Dendritic cell treated with granulocyte-macrophage colony-stimulating factor and Interleukin-4, amounts not matched to agents 40 ng/mL and 50 ng/mL, for 4 days (primary cell): ENCODE measurements at regions of chr2 and their contacts with region 1.

Region 1: GRCh38 chr2:148201075-148202004 is 180.4 kb downstream of the MBD5 start:
- H3K4me3 Mint-ChIP-seq: no peak overlapping the region
- H3K27ac Mint-ChIP-seq: no peak overlapping the region
- H3K4me1 Mint-ChIP-seq: no peaks in the 10 kb centered on the region
- H3K27me3 Mint-ChIP-seq: no peaks in the 10 kb centered on the region

Region 2: DNA sequence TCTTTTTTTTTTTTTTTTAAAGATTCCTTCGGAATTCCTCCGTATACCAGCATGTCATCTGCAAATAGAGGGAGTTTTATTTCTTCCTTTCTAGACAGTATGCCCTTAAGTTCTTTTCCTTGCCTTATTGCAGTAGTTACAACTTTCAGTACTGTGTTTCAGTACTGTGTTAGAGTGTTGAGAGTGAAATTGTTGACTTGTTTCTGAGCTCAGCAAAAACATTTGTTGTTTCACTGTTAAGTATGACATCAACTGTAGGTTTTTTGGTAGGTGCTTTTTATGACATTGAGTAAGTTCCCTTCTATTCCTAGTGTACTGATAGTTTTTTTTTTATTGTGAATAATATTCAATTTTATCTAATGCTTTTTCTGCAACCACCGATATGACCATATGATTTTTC is 312.7 kb before region 1 on chr2:
- intact Hi-C with region 1: no loop called
- H3K4me3 Mint-ChIP-seq: no peak overlapping the region
- H3K27ac Mint-ChIP-seq: no peak overlapping the region
- H3K4me1 Mint-ChIP-seq: peaks cover 20% of the 10 kb centered on the region
- H3K27me3 Mint-ChIP-seq: no peaks in the 10 kb centered on the region

Region 3: DNA sequence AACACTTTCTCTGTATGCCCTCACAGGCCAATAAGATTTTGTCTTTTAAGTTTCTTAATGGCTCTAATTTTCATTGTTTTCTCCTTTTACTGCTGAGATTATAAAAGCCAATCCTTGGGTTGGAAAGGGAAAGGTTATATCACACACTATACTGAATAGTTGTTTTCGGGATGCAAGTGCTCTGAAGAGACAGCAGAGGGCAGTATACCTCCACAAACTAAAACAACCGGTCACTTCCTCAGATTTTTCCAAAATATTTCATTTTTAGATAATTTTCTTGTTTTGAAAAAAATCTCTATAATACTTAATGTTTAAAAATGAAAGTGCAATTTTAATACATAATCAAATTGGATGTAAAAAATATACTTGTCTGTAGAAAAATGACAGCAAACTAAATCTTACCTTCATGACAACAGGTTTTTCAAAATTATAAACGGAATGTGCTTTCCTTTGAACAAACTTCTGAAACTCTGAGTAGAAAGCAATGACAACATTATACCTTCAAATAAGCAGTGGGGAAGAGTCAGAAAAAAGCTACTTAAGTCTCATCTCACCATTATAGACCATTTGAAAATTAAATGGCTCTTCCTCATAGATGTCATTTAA is 263.5 kb before region 1 on chr2:
- intact Hi-C with region 1: loop called (anchors 5 kb)
- H3K4me3 Mint-ChIP-seq: no peak overlapping the region
- H3K27ac Mint-ChIP-seq: no peak overlapping the region
- H3K4me1 Mint-ChIP-seq: no peaks in the 10 kb centered on the region
- H3K27me3 Mint-ChIP-seq: no peaks in the 10 kb centered on the region

Region 4: GRCh38 chr2:147989809-147990403 is 211.4 kb before region 1 on chr2:
- intact Hi-C with region 1: loop called (anchors 5 kb)
- H3K4me3 Mint-ChIP-seq: no peak overlapping the region
- H3K27ac Mint-ChIP-seq: no peak overlapping the region
- H3K4me1 Mint-ChIP-seq: peaks cover 6% of the 10 kb centered on the region
- H3K27me3 Mint-ChIP-seq: no peaks in the 10 kb centered on the region

Region 5: DNA sequence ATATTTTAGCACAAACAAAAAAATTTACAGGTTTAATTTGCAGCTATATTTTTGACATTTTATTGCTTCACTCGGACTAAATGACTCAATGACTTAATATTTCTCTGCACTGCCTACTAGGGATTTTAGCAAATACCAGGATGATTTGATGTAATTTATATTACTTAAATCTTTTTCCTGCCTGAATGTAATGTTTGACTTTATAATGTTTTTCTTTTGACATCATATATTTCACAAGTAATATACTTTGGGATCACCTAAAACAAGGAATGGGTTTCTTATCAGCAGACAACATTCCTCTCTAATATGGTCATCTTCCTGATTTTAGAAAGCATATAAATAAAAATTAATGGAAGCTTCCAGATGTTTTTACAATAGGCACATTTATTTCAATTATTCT is 190.0 kb after region 1 on chr2:
- intact Hi-C with region 1: no loop called
- H3K4me3 Mint-ChIP-seq: no peak overlapping the region
- H3K27ac Mint-ChIP-seq: no peak overlapping the region
- H3K4me1 Mint-ChIP-seq: no peaks in the 10 kb centered on the region
- H3K27me3 Mint-ChIP-seq: no peaks in the 10 kb centered on the region

Region 6: DNA sequence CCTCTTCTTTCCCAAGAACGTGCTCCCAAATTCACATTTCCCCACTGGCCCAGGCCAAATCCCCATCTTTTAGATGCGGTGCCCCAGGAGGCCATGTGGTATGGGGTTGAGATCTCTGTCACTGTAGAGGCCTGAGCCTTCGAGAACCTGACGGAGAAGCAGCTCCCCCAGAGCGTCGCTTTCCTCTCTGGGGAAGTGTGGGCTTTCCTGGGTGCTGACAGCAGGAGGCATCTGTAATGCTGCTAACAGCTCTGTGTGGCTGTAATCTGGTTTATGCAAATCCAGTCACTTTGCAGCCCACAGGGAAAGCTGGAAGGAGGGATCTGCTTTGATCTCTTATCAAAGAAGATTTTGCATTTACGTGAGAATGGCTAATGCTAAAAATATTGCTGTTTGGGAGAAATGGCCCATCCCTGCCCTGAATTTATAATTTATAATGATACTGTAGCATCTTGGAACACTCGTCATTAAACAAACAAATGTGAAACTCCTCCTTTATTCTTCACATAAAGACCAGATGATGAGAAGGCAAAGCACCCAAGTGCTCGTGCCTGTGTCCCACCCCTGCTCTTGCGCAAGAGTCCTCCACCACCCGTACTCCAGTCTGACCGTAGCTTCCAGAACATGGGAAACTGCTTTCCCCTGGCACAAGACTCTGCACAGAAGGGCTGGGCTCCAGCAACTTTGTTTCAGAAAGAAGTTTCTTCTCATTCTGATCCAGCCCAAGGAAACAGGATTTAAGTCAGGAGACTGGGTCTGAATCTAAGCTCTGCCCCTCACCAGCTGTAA is 333.3 kb after region 1 on chr2:
- intact Hi-C with region 1: no loop called
- H3K4me3 Mint-ChIP-seq: no peak overlapping the region
- H3K27ac Mint-ChIP-seq: no peak overlapping the region
- H3K4me1 Mint-ChIP-seq: peaks cover 39% of the 10 kb centered on the region
- H3K27me3 Mint-ChIP-seq: no peaks in the 10 kb centered on the region